HEK293T (cell line): ENCODE measurements at regions of chr17 and their contacts with region 1.

Region 1: GRCh38 chr17:41918314-41919164 is at the start of gene ACLY:
- DNase-seq: peak; percentile 100

Region 2: GRCh38 chr17:41786227-41787020 is 132.1 kb before region 1 on chr17 and contains the start of gene JUP:
- CTCF ChIA-PET with region 1: interaction called, 4 read pairs
- POLR2A ChIA-PET with region 1: interaction called, 12 read pairs
- DNase-seq: peak; percentile 100

Region 3: GRCh38 chr17:41835800-41836549 is 82.6 kb before region 1 on chr17 and contains the start of gene NT5C3B:
- CTCF ChIA-PET with region 1: no interaction called
- POLR2A ChIA-PET with region 1: interaction called, 10 read pairs
- DNase-seq: peak; percentile 98

Region 4: GRCh38 chr17:41894791-41895331 is 23.7 kb before region 1 on chr17:
- CTCF ChIA-PET with region 1: no interaction called
- POLR2A ChIA-PET with region 1: interaction called, 16 read pairs
- DNase-seq: no peak

Region 5: DNA sequence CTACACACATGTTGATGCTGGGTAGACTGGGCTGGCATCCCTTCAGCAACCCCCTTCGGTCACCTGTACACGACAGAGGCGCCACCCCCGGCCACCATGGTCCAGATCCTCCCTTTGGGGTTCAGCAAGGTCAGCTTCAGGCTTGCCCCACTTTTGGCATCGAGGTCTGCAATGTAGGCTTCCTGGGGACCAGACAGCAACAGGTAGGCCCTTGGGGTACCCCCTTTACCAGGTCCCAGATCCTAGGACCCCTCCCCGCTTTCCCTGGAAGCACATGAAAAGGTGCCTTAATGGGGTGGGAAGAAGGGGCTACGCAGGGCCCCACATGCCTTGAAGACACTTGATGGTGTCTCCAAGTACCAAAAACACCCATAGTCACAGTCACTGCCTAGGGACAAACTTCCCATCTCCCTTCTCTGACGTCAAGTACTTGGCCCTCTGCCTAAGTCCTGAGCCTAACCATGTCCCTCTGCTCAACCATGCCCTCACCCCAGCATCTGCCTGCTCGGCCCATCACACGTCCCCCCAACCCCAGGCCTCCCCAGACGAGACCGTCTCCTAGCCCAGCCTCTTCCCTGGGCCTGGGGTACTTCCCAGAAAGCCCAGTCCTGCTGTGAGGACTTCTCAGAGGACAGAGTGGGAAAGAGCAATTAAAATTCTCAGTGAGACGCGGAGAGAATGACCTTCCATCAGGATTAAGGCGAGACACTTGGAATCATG is 11.9 kb before region 1 on chr17:
- CTCF ChIA-PET with region 1: no interaction called
- POLR2A ChIA-PET with region 1: interaction called, 10 read pairs
- DNase-seq: no peak

Region 6: DNA sequence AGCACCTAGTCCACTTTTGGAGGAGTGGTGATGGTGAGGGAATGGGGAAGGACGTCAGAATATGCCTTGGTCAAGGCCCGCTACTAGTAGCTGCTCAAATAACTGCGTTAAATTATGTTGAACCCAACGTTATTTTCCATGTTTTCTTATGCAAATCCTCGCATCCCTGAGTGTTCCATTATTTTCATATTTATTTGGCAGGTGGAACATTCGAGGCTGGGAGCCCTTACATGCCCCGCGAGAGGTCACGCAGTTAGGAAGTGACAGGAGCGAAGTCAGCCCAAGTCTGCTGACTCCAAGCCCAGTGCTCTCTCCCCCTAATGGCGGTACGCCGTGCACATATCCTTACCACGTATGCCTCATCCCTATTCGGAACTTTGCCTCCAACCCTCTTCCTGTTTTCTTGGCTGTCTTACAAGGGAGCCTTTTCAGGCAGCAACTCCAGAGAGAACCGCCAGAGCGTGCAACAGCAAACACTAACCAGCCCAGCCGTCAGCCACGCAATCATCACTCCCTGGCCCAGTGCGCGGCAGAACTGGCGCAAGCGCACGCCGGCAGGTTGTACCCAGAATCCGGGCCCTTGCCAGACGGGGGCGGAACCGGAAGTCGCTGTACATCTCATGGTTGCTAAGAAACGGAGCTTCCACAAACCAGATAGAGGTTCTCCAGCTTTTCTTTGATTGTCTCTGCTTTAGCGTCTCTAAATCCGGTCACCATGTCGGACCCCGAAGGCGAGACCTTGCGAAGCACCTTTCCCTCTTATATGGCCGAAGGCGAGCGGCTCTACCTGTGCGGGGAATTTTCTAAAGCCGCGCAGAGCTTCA is 11.7 kb after region 1 on chr17 and contains the start of gene ODAD4:
- CTCF ChIA-PET with region 1: interaction called, 8 read pairs
- POLR2A ChIA-PET with region 1: interaction called, 148 read pairs
- DNase-seq: peak; percentile 99

Region 7: DNA sequence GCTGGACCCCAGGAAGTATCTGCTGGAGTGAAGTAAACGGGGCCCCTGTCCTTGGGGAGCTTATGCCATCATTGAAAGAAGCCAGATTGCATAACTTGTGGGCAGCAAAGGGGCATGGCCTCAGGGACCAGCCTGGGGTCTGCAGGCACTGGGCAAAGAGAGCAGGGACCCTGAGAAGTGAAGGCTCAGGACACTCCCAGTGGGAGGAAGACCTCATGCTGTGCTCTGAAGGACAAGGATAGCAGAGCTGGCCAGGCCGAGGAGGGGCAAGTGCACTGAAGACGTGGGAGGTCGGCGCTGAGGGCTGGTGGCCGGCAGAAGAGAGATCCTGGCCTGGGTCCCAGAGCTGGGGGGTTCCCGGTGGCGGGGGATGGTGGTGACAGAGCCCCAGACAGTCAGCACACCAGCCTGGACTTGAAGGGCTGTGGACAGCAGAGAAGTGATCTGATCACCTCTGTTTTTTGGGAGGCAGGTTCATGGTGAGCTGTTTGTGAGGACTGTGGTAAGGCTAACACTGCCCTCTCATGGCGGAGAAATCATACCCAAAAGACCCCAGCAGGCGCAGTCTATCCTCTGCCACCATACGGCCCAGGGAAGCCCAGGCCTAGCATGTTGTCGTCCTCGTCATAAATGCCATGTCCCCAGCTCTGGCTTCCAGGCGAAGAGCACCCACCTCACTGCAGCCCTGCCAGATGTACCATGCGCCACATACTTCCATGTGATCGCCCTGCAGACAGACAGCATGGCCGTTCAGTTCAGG is 41.0 kb after region 1 on chr17:
- CTCF ChIA-PET with region 1: interaction called, 8 read pairs
- POLR2A ChIA-PET with region 1: interaction called, 38 read pairs
- DNase-seq: peak; percentile 60